Spleen (tissue), 13 donors: ENCODE measurements at regions of chr2 and their contacts with region 1.

Region 1: GRCh38 chr2:39234754-39235153 is 9.0 kb downstream of the CDKL4 start:
- DNase-seq: no peak
- H3K4me3 ChIP-seq: no peak overlapping the region
- H3K27ac ChIP-seq: no peak overlapping the region
- H3K4me1 ChIP-seq: peaks cover 0 to under 1% (median 0%) of the 10 kb centered on the region in 6 donors
- H3K27me3 ChIP-seq: no peaks in the 10 kb centered on the region
- CTCF ChIP-seq: no peak
- POLR2A ChIP-seq: no peak

Region 2: DNA sequence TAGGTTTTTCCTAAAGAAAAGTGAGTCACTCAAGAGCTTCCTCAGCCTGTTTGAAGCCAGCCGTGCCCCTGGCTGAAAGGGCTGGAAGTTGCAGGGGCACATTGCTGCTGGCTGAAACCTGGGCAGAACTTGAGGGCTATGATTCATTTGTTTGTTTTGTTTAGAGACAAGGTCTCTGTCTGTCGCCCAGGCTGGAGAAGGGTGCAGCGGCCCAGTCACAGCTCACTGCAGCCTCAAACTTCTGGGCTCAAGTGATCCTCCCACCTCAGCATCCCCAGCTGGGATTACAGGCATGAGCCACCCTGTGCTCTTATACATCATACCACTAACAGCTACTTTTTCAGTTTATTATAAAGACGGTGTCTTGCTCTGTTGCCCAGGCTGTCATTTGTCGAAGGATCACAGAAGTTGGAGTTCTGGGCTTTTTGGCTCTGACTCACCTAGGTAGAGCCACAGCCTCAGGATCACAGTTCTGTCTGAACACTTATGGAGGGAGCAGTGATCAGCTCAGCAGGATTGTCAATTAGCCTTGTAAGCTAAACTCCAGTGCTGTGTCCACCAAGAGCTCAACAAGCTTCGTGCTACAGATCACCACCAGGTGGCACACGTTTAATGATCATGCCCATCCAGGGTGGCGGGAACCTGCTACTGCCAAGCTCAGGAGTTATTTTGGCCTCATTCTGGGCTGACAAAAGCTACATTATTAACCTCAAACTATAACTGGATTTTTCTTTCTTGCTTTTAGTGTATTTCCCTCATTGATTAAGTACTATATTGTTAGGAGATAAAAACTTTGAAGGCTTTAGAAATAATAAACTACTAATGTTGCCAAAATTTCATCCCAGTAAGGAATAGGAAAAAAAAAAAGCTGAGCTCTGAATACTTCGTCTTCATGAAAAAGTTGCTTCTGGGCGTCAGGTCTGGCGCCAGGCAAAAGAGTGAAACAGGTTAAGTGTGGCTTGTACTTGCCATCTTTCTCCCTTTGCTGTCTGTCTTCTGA is 287.2 kb before region 1 on chr2:
- intact Hi-C with region 1: loop called (anchors 5 kb)
- DNase-seq: peak; percentile 77
- H3K4me3 ChIP-seq: no peak overlapping the region
- H3K27ac ChIP-seq: no peak overlapping the region
- H3K4me1 ChIP-seq: no peaks in the 10 kb centered on the region
- H3K27me3 ChIP-seq: no peaks in the 10 kb centered on the region
- CTCF ChIP-seq: peak; percentile 25 to 76 (median 62)
- POLR2A ChIP-seq: no peak

Region 3: GRCh38 chr2:39513641-39514094 is 278.9 kb after region 1 on chr2:
- intact Hi-C with region 1: no loop called
- DNase-seq: no peak
- H3K4me3 ChIP-seq: no peak overlapping the region
- H3K27ac ChIP-seq: peak overlapping the region in 7 of 8 donors; percentile 49 to 65 (median 59)
- H3K4me1 ChIP-seq: peaks cover 15 to 81% (median 56%) of the 10 kb centered on the region in 6 donors
- H3K27me3 ChIP-seq: no peaks in the 10 kb centered on the region
- CTCF ChIP-seq: peak in 10 of 11 experiments; percentile 20 to 67 (median 52)
- POLR2A ChIP-seq: no peak